Aorta (tissue), 5 donors: ENCODE measurements at regions of chr3 and their contacts with region 1.

Region 1: GRCh38 chr3:52346623-52347530 is 30.8 kb downstream of the DNAH1 start:
- DNase-seq: peak in 1 of 2 donors; percentile 74
- ATAC-seq: peak; percentile 50
- H3K4me3 ChIP-seq: no peak overlapping the region
- H3K27ac ChIP-seq: peak overlapping the region in 1 of 2 donors; percentile 65
- H3K4me1 ChIP-seq: no peaks in the 10 kb centered on the region
- H3K27me3 ChIP-seq: no peaks in the 10 kb centered on the region

Region 2: GRCh38 chr3:52299879-52300611 is 46.8 kb before region 1 on chr3:
- intact Hi-C with region 1: loop called in 1 of 2 experiments (anchors 5 kb)
- DNase-seq: no peak
- ATAC-seq: peak; percentile 57
- H3K4me3 ChIP-seq: no peak overlapping the region
- H3K27ac ChIP-seq: no peak overlapping the region
- H3K4me1 ChIP-seq: no peaks in the 10 kb centered on the region
- H3K27me3 ChIP-seq: no peaks in the 10 kb centered on the region